Dorsolateral prefrontal cortex (tissue), 120 donors: ENCODE measurements at regions of chr4 and their contacts with region 1.

Region 1: DNA sequence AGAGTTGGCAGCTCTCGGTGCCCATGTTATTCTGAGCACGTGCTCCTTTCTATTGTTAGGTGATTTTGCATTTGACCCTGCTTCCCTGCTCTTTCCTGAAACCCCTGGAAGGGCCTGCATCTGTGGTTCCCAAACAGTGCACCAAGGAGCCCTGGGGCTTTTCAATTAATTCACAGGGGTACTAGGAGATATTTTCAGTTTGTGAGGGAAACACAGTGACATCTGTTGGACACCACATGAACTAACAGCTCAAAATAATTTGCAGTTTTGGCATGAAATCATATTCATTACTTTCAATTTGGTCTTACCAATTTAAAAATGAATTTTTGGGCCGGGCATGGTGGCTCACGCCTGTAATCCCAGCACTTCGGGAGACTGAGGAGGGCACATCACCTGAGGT is 156.6 kb downstream of the GATB start:
- DNase-seq: no peak
- H3K4me3 ChIP-seq: no peak overlapping the region
- H3K27ac ChIP-seq: no peak overlapping the region
- H3K27me3 ChIP-seq: no peaks in the 10 kb centered on the region
- CTCF ChIP-seq: peak in 54 of 56 donors; percentile 12 to 59 (median 45)

Region 2: GRCh38 chr4:150145090-150145949 is 1458.9 kb before region 1 on chr4:
- intact Hi-C with region 1: no loop called
- DNase-seq: no peak
- H3K4me3 ChIP-seq: no peak overlapping the region
- H3K27ac ChIP-seq: no peak overlapping the region
- H3K27me3 ChIP-seq: no peaks in the 10 kb centered on the region
- CTCF ChIP-seq: peak in 3 of 56 donors; percentile 5 to 18 (median 13)

Region 3: DNA sequence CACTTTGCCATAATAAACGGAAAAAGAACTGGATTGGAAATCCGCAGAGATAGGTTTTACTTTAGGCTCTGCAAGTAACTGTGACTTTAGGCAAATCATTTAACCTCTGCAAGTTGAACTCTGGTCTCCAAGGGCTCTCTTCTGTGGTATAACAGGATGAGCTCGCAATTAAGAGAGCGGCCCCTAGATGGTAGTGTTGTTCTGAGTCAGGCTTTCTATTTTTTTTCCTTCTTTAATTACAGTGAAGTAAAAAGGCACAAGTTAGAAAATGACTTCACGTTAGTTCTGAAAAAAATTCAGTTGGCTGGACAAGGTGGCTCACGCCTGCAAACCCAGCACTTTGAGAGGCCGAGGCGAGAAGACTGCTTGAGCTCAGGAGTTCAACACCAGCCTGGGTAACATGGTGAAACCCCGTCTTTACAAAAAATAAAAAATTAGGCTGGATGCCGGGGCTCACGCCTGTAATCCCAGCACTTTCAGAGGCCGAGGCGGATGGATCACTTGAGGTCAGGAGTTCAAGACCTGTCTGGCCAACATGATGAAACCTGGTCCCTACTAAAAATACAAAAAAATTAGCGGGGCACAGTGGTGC is 486.8 kb before region 1 on chr4:
- intact Hi-C with region 1: loop called in 1 of 2 experiments (anchors 10 kb)
- DNase-seq: peak in 7 of 10 donors; percentile 31 to 69 (median 46)
- H3K4me3 ChIP-seq: no peak overlapping the region
- H3K27ac ChIP-seq: peak overlapping the region in 23 of 59 donors; percentile 4 to 73 (median 38)
- H3K27me3 ChIP-seq: no peaks in the 10 kb centered on the region
- CTCF ChIP-seq: peak; percentile 48 to 87 (median 77)

Region 4: DNA sequence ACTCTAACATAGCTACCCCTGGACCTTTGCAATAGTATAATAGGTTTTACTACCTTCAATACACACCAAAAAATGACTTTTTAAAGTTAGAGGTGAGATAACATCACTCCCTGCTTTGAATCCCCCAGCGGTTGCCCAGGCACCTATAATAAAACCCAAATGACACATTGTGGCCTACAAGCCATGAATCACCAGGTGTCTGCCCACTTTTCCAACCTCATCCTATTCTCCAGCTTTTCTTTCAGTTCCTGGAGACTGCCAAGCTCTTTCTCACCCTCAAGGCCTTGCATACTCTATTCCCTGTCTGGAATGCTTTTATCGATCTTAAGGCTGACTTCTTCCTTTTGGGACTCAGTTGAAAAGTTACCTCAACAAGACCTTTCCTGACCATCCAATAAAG is 343.7 kb before region 1 on chr4:
- intact Hi-C with region 1: loop called in 1 of 2 experiments (anchors 10 kb)
- DNase-seq: no peak
- H3K4me3 ChIP-seq: no peak overlapping the region
- H3K27ac ChIP-seq: no peak overlapping the region
- H3K27me3 ChIP-seq: no peaks in the 10 kb centered on the region
- CTCF ChIP-seq: no peak

Region 5: GRCh38 chr4:151644622-151645021 is 40.4 kb after region 1 on chr4:
- intact Hi-C with region 1: no loop called
- DNase-seq: no peak
- H3K4me3 ChIP-seq: no peak overlapping the region
- H3K27ac ChIP-seq: no peak overlapping the region
- H3K27me3 ChIP-seq: no peaks in the 10 kb centered on the region
- CTCF ChIP-seq: peak in 24 of 56 donors; percentile 7 to 47 (median 18)